Ovary (tissue), 10 donors: ENCODE measurements at regions of chr5 and their contacts with region 1.

Region 1: GRCh38 chr5:55502759-55503158 is 32.0 kb downstream of the PLPP1 start:
- DNase-seq: no peak
- H3K4me3 ChIP-seq: no peak overlapping the region
- H3K27ac ChIP-seq: no peak overlapping the region
- H3K4me1 ChIP-seq: peaks cover 3% of the 10 kb centered on the region
- H3K27me3 ChIP-seq: no peaks in the 10 kb centered on the region
- CTCF ChIP-seq: no peak
- EP300 ChIP-seq: no peak
- POLR2A ChIP-seq: no peak

Region 2: DNA sequence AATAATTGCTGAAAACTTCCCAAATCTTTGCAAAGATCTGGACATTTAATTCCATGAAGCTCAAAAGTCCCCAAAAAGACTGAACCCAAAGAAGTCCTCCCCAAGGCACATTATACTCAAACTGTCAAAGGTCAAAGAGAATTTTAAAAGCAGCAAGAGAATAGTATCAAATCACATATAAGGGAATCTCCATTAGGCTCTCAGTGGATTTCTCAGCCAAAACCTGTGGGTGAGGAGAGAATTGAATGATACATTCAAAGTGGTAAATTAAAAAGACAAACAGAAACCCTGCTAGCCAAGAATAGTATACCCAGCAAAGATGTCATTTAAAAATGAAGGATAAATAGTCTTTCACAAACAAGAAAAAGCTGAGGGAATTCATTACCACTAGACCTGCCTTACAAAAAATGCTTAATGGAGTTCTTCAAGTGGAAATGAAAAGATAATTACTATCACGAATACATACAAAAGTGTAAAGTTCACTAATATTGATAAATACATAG is 1808.2 kb before region 1 on chr5:
- intact Hi-C with region 1: loop called in 1 of 4 experiments (anchors 5 kb)
- DNase-seq: no peak
- H3K4me3 ChIP-seq: no peak overlapping the region
- H3K27ac ChIP-seq: no peak overlapping the region
- H3K4me1 ChIP-seq: no peaks in the 10 kb centered on the region
- H3K27me3 ChIP-seq: no peaks in the 10 kb centered on the region
- CTCF ChIP-seq: no peak
- EP300 ChIP-seq: no peak
- POLR2A ChIP-seq: no peak